GM12878 (cell line): ENCODE measurements at regions of chr10 and their contacts with region 1.

Region 1: DNA sequence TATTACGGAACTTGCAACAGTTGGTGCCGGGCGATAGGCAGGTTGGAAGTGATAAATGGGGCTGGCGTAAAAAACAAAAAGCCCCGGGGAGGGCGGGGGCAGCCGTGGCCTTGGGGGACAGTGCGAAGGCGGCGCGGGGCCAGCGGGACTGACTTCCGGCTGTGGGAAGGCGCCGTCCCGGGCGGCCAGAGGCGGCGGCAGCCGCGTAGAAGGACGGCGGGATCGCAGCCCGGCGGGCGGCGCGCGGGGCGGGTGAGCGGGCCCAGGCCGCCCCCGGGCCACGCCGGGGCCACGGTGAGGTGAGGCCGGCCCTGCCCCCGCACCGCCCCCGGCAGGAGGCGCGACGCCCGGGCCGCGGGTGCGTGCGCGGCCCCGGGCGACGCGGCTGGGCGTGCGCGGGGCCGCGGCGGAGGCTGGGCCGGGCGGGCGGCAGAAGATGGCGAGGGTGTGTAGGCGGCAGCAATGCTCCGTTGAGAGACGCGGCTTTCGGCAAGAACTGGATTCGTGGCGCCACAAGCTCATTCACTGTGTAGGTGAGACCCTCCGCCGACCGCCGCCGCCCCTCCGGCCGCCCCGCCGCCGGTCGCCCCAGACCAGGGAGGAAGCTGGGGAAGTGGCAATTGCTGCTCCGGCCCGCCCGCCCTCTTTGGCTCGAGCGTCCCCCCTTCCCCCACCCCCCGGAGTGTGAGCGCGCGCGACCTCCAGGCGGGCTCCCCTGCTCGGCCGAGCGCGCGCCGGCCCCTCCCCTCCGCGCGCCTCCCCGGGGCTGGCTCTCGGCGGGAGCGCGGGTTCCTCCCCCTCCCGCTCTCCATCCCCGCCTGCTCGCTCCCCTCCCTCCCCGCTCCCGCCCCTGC is at the start of gene LCOR:
- DNase-seq: no peak
- ATAC-seq: peak; percentile 64
- H3K4me3 ChIP-seq: peak within 1 kb of the TSS; percentile 100
- H3K27ac ChIP-seq: peak within 1 kb of the TSS; percentile 80
- H3K4me1 ChIP-seq: peaks cover 12% of the 10 kb centered on the region
- H3K27me3 ChIP-seq: no peaks in the 10 kb centered on the region
- CTCF ChIP-seq: no peak
- EP300 ChIP-seq: no peak
- POLR2A ChIP-seq: peak; percentile 90
- RAD21 ChIP-seq: no peak
- polyA plus RNA-seq, gene LCOR: 1.6 to 6.1 TPM

Region 2: GRCh38 chr10:96395931-96396877 is 435.9 kb before region 1 on chr10:
- CTCF ChIA-PET with region 1: interaction called, 3 read pairs
- POLR2A ChIA-PET with region 1: no interaction called
- RAD21 ChIA-PET with region 1: no interaction called
- SMC1A ChIA-PET with region 1: interaction called, 3 read pairs
- in situ Hi-C with region 1: loop called (anchors 10 kb)
- intact Hi-C with region 1: loop called (anchors 10 kb)
- DNase-seq: no peak
- ATAC-seq: peak; percentile 97
- H3K4me3 ChIP-seq: no peak overlapping the region
- H3K27ac ChIP-seq: no peak overlapping the region
- H3K4me1 ChIP-seq: no peaks in the 10 kb centered on the region
- H3K27me3 ChIP-seq: peaks cover 3 to 4% of the 10 kb centered on the region in 2 experiments; a peak in 3 of 4 replicates
- CTCF ChIP-seq: peak; percentile 86 to 91 (median 87)
- EP300 ChIP-seq: no peak
- POLR2A ChIP-seq: no peak
- RAD21 ChIP-seq: peak; percentile 84

Region 3: DNA sequence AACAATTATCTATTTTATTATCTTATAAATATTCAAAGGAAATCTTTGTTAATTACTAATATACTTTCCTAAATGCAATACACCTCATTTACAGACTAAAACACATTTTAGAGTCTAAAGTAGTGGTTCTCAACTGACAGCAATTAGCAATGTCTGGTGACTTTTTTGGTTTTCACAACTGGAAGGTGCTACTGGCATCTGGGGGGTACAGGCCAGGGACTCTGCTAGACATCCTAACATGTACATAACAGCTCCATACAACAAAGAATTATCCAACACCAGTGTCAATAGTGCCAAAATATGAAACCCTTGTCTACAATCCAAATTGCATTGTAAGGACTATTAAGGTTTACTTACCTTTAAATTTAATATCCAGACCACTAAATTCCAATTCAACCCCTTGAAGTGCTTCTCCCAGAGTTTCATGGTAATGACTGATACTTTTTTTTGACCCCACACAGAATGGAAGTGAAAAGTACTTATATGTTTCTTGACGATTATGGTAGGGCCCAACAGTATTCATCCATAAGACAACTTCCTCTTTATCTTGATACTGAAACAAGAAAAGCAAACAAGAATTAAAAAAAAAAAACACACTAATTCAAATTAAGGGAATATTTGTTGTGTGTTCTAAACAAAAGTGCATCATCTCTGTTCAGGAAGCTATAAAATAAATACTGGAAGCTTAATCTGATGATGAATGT is 255.7 kb before region 1 on chr10:
- CTCF ChIA-PET with region 1: no interaction called
- POLR2A ChIA-PET with region 1: no interaction called
- RAD21 ChIA-PET with region 1: no interaction called
- SMC1A ChIA-PET with region 1: no interaction called
- in situ Hi-C with region 1: no loop called
- intact Hi-C with region 1: no loop called
- DNase-seq: no peak
- ATAC-seq: peak; percentile 72
- H3K4me3 ChIP-seq: no peak overlapping the region
- H3K27ac ChIP-seq: peak overlapping the region; percentile 42; the same call in 1 of the 2 replicates
- H3K4me1 ChIP-seq: peaks cover 6% of the 10 kb centered on the region; the same call in 1 of the 2 replicates
- H3K27me3 ChIP-seq: no peaks in the 10 kb centered on the region
- CTCF ChIP-seq: no peak
- EP300 ChIP-seq: no peak
- POLR2A ChIP-seq: no peak
- RAD21 ChIP-seq: no peak

Region 4: DNA sequence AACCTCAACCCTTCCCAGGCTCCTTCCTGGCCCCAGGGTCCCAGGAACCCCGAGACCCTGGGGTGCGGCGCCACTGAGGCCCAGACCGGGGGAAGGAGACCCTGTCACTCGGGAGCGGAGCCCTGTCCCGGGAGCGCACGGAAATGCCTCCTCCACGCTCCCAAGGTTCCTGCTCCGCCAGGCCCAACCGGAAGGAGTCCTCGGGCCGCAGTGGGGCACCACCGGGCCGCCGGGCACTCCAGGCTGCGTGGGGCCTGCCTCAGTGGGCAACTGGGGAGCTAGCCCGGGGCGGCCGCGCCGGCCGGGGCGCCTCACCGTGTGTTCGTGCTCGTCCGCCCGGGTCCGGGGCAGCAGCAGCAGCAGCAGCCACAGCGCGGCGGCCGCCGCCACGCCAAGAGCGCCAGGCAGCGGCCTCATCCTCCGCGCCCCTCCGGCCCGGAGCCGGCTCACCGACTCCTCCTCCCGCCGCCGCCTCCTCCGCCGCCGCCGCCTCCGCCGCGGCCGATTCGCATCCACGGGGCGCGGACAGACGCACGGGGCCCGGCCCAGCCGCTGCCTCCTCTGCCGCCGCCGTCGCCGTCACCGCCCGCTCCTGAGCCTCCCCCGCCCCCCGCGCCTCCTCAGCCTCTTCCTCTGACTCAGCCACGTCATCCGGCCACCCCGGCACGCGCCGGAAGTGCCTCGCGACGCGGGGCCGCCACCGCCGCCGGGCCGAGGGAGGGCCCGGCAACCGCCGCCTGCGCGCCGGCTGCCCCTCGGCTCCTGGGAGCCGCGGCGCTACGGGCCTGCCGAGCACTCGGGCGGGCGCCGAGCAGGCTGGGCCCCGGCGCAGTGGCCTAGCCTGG is 245.5 kb before region 1 on chr10 and contains the start of gene TM9SF3:
- CTCF ChIA-PET with region 1: no interaction called
- POLR2A ChIA-PET with region 1: no interaction called
- RAD21 ChIA-PET with region 1: no interaction called
- SMC1A ChIA-PET with region 1: no interaction called
- in situ Hi-C with region 1: no loop called
- intact Hi-C with region 1: loop called (anchors 5 kb)
- DNase-seq: no peak
- ATAC-seq: peak; percentile 66
- H3K4me3 ChIP-seq: peak within 1 kb of the TSS; percentile 85
- H3K27ac ChIP-seq: peak within 1 kb of the TSS; percentile 96
- H3K4me1 ChIP-seq: peaks cover 22% of the 10 kb centered on the region
- H3K27me3 ChIP-seq: no peaks in the 10 kb centered on the region
- CTCF ChIP-seq: no peak
- EP300 ChIP-seq: no peak
- POLR2A ChIP-seq: peak; percentile 90
- RAD21 ChIP-seq: no peak
- polyA plus RNA-seq, gene TM9SF3: 17.1 to 20.4 TPM

Region 5: GRCh38 chr10:96765406-96766240 is 66.5 kb before region 1 on chr10:
- CTCF ChIA-PET with region 1: interaction called, 11 read pairs
- POLR2A ChIA-PET with region 1: interaction called, 5 read pairs
- RAD21 ChIA-PET with region 1: interaction called, 6 read pairs
- SMC1A ChIA-PET with region 1: interaction called, 14 read pairs
- in situ Hi-C with region 1: loop called (anchors 5 kb)
- intact Hi-C with region 1: loop called (anchors 1 kb)
- DNase-seq: no peak
- ATAC-seq: peak; percentile 94
- H3K4me3 ChIP-seq: no peak overlapping the region
- H3K27ac ChIP-seq: no peak overlapping the region
- H3K4me1 ChIP-seq: peaks cover 15% of the 10 kb centered on the region
- H3K27me3 ChIP-seq: no peaks in the 10 kb centered on the region
- CTCF ChIP-seq: peak; percentile 87 to 93 (median 89)
- EP300 ChIP-seq: no peak
- POLR2A ChIP-seq: no peak
- RAD21 ChIP-seq: peak; percentile 87

Region 6: DNA sequence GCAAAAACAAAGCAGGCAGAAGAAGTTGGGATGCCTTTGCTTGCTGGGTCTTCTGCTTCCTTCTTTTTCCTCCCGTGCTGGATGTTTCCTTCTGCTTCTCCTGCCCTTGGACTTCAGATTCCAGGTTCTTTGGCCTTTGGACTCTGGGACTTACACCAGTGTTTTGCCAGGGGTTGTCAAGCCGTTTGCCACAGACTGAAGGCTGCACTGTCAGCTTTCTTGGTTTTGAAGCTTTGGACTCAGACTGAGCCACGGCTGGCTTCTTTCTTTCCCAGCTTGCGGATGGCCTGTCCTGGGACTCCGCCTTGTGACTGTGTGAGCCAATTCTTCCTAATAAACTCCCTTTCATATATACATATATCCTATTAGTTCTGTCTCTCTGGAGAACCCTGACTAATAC is 11.3 kb before region 1 on chr10:
- CTCF ChIA-PET with region 1: no interaction called
- POLR2A ChIA-PET with region 1: no interaction called
- RAD21 ChIA-PET with region 1: no interaction called
- SMC1A ChIA-PET with region 1: no interaction called
- in situ Hi-C with region 1: no loop called
- intact Hi-C with region 1: no loop called
- DNase-seq: no peak
- ATAC-seq: no peak
- H3K4me3 ChIP-seq: no peak overlapping the region
- H3K27ac ChIP-seq: no peak overlapping the region
- H3K4me1 ChIP-seq: no peaks in the 10 kb centered on the region
- H3K27me3 ChIP-seq: no peaks in the 10 kb centered on the region; a peak in 1 of 4 replicates
- CTCF ChIP-seq: no peak
- EP300 ChIP-seq: no peak
- POLR2A ChIP-seq: no peak
- RAD21 ChIP-seq: no peak

Region 7: DNA sequence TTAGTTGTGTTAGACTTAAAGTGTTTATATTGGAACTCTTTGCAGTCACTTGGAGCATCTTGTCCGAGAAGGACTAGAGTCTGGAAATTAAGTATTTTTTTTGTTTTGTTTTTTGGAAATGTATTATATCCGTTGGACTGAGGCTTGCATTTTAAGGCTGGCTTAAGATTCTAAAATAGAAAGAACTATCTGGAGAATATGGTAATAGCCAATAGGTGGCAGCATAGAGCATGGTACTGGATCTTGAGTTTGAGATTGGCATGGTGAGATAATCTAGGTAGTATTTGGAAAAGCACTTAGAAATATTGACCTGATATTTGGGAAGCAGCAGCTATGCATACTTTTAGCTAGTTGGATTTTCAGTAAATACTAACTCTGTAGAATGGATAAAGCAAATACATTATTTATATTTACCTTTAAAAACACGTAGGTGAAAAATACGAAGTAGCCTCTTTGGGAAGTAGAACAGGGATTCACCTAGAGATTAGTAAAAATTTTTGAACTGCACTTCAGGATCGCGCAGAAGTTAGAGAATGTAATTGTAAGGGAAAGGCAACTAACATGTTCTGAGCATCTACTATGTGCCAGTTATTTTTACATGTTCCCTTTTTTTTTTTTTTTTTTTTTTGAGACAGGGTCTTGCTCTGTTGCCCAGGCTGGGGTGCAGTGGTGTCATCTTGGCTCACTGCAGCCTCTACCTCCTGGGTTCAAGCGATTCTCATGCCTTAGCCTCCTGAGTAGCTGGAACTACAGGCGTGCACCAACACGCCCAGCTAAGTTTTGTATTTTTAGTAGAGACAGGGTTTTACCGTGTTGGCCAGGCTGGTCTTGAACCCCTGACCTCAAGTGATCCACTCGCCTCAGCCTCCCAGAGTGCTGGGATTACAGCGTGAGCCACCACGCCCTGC is 78.6 kb after region 1 on chr10:
- CTCF ChIA-PET with region 1: interaction called, 18 read pairs
- POLR2A ChIA-PET with region 1: no interaction called
- RAD21 ChIA-PET with region 1: interaction called, 4 read pairs
- SMC1A ChIA-PET with region 1: interaction called, 3 read pairs
- in situ Hi-C with region 1: no loop called
- intact Hi-C with region 1: loop called (anchors 5 kb)
- DNase-seq: peak; percentile 28
- ATAC-seq: peak; percentile 84
- H3K4me3 ChIP-seq: no peak overlapping the region
- H3K27ac ChIP-seq: peak overlapping the region; percentile 24; the same call in 1 of the 2 replicates
- H3K4me1 ChIP-seq: 0 out of 2 replicates have a peak, but pooled peaks cover 3% of the 10 kb centered on the region
- H3K27me3 ChIP-seq: no peaks in the 10 kb centered on the region
- CTCF ChIP-seq: peak; percentile 65 to 67 (median 66)
- EP300 ChIP-seq: no peak
- POLR2A ChIP-seq: no peak
- RAD21 ChIP-seq: peak; percentile 69